IMR-90 (cell line): ENCODE measurements at regions of chr2 and their contacts with region 1.

Region 1: GRCh38 chr2:240434728-240435456 is 571 bp upstream of the GPC1 start:
- DNase-seq: peak; percentile 88
- ATAC-seq: peak; percentile 73
- H3K4me3 ChIP-seq: peak overlapping the region; percentile 52
- H3K27ac ChIP-seq: peak overlapping the region; percentile 93
- H3K4me1 ChIP-seq: peaks cover 30% of the 10 kb centered on the region
- H3K27me3 ChIP-seq: no peaks in the 10 kb centered on the region
- CTCF ChIP-seq: no peak
- POLR2A ChIP-seq: no peak; the same call in 1 of the 2 replicates
- RAD21 ChIP-seq: no peak

Region 2: GRCh38 chr2:240060977-240061591 is 373.8 kb before region 1 on chr2:
- CTCF ChIA-PET with region 1: no interaction called
- POLR2A ChIA-PET with region 1: no interaction called
- dilution Hi-C with region 1: no loop called
- in situ Hi-C with region 1: no loop called
- intact Hi-C with region 1: loop called (anchors 5 kb)
- DNase-seq: peak; percentile 57
- ATAC-seq: peak; percentile 96
- H3K4me3 ChIP-seq: no peak overlapping the region
- H3K27ac ChIP-seq: no peak overlapping the region
- H3K4me1 ChIP-seq: no peaks in the 10 kb centered on the region
- H3K27me3 ChIP-seq: peaks cover 16% of the 10 kb centered on the region
- CTCF ChIP-seq: peak; percentile 69
- POLR2A ChIP-seq: no peak
- RAD21 ChIP-seq: peak; percentile 72

Region 3: GRCh38 chr2:240232961-240233893 is 201.7 kb before region 1 on chr2:
- CTCF ChIA-PET with region 1: interaction called, 10 read pairs
- POLR2A ChIA-PET with region 1: no interaction called
- dilution Hi-C with region 1: no loop called
- in situ Hi-C with region 1: loop called (anchors 5 kb)
- intact Hi-C with region 1: loop called (anchors 1 kb)
- DNase-seq: peak; percentile 71
- ATAC-seq: peak; percentile 88
- H3K4me3 ChIP-seq: peak overlapping the region; percentile 22; the same call in 1 of the 2 replicates
- H3K27ac ChIP-seq: no peak overlapping the region
- H3K4me1 ChIP-seq: peaks cover 12% of the 10 kb centered on the region
- H3K27me3 ChIP-seq: no peaks in the 10 kb centered on the region; the same call in 1 of the 2 replicates
- CTCF ChIP-seq: peak; percentile 94
- POLR2A ChIP-seq: 0 out of 2 replicates have a peak, but pooled peaks have one; percentile 48
- RAD21 ChIP-seq: peak; percentile 98

Region 4: DNA sequence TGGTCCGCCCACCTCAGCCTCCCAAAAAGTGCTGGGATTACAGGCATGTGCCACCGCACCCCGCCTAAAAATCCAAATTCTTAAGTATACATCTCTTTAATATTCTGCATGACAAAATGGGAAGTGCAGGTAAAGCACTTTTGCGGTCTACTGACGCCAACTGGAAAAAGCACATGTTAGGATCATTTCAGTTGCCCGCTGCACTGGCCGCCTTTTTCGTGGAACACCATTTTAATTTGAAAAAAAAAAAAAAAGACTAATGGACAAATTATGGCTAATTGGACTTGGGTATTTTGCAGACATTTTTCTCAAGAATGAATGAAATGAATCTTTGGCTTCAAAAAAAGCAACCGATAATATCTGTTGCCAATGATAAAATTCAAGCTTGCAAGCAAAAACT is 128.7 kb before region 1 on chr2:
- CTCF ChIA-PET with region 1: no interaction called
- POLR2A ChIA-PET with region 1: interaction called, 16 read pairs
- dilution Hi-C with region 1: no loop called
- in situ Hi-C with region 1: no loop called
- intact Hi-C with region 1: no loop called
- DNase-seq: no peak
- ATAC-seq: no peak
- H3K4me3 ChIP-seq: no peak overlapping the region
- H3K27ac ChIP-seq: no peak overlapping the region
- H3K4me1 ChIP-seq: no peaks in the 10 kb centered on the region
- H3K27me3 ChIP-seq: peaks cover 22% of the 10 kb centered on the region
- CTCF ChIP-seq: no peak
- POLR2A ChIP-seq: no peak
- RAD21 ChIP-seq: no peak

Region 5: DNA sequence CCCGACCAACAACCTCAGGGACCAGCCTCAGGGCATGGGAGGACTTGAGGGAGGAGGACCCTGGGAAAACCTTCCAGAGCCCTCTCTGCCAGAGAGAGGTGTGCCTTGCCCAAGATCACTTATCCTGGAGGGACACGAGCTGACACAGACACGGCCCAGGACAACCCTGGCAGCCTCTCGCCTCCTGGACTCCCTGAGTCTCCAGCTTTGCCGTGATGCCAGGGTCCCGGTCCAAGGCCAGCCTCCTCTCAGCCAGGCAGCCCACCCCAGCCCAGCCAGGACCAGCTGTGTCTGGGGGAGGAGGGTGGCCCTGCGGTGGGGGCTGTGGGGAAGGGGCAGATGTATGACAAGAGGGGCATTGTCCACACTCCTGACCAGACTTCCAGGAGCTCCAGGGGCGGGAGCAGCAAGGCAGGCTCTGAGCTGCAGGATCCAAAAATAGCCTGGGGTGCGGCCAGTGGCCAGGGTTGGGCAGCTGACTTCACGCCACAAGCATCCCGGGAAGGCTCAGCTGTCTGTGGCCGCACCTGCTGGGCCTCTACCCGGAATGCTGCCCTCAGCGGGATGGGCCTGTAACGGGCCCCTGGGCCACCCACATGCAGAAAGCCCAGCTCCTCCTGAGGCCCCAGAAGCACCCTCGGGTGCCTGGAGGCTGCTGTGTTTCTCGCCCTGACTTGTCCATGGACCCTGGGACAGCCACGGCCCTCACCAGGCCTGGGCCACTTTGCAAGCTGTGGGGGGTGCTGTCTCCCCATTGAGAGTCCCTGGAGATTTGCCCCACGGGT is 64.9 kb before region 1 on chr2:
- CTCF ChIA-PET with region 1: no interaction called
- POLR2A ChIA-PET with region 1: no interaction called
- dilution Hi-C with region 1: no loop called
- in situ Hi-C with region 1: no loop called
- intact Hi-C with region 1: loop called (anchors 1 kb)
- DNase-seq: peak; percentile 93
- ATAC-seq: peak; percentile 72
- H3K4me3 ChIP-seq: no peak overlapping the region
- H3K27ac ChIP-seq: peak overlapping the region; percentile 82
- H3K4me1 ChIP-seq: peaks cover 31% of the 10 kb centered on the region
- H3K27me3 ChIP-seq: no peaks in the 10 kb centered on the region
- CTCF ChIP-seq: 0 out of 2 replicates have a peak, but pooled peaks have one; percentile 13
- POLR2A ChIP-seq: peak; percentile 28; the same call in 1 of the 2 replicates
- RAD21 ChIP-seq: no peak

Region 6: DNA sequence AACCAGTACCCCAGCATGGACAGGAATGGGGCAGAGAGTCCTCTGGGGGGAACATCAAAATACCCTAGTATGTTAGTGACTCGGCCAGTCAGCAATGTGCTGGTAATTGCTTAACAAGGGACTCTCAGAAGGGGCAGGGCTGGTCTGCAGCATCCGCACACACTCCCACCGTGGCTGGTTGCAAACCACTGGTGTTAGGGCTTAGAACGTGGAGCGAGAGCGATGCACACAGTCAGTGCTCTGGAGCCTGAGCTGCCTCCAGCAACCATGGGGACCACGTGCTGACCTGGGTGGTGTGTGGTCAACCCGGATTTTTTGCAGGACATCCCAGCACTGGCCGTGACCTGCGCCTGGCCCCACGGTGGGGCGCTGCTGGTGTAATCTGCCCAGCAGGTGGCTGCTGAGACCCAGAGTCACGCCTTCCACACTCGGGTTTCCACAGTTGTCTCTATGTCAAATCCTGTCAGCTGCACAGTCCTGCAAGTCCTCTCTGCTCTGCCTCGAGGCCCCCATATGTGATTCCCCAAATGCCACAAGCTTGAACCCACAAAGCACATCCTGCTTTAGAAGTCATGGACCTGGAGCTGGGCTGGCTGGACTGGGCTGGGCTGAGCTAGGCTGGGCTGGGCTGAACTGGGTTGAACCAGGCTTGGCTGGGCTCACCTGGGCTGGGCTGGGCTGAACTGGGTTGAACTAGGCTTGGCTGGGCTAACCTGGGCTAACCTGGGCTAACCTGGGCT is 50.0 kb before region 1 on chr2:
- CTCF ChIA-PET with region 1: no interaction called
- POLR2A ChIA-PET with region 1: interaction called, 3 read pairs
- dilution Hi-C with region 1: no loop called
- in situ Hi-C with region 1: no loop called
- intact Hi-C with region 1: loop called (anchors 2 kb)
- DNase-seq: no peak
- ATAC-seq: no peak
- H3K4me3 ChIP-seq: no peak overlapping the region
- H3K27ac ChIP-seq: no peak overlapping the region
- H3K4me1 ChIP-seq: peaks cover 11% of the 10 kb centered on the region
- H3K27me3 ChIP-seq: no peaks in the 10 kb centered on the region
- CTCF ChIP-seq: no peak
- POLR2A ChIP-seq: no peak
- RAD21 ChIP-seq: no peak

Region 7: GRCh38 chr2:240791821-240792628 is 357.1 kb after region 1 on chr2:
- CTCF ChIA-PET with region 1: no interaction called
- POLR2A ChIA-PET with region 1: no interaction called
- dilution Hi-C with region 1: no loop called
- in situ Hi-C with region 1: no loop called
- intact Hi-C with region 1: no loop called
- DNase-seq: no peak
- ATAC-seq: peak; percentile 40
- H3K4me3 ChIP-seq: no peak overlapping the region
- H3K27ac ChIP-seq: no peak overlapping the region
- H3K4me1 ChIP-seq: no peaks in the 10 kb centered on the region
- H3K27me3 ChIP-seq: peaks cover 34% of the 10 kb centered on the region
- CTCF ChIP-seq: no peak
- POLR2A ChIP-seq: no peak
- RAD21 ChIP-seq: no peak